CD4-positive, alpha-beta memory T cell (primary cell): ENCODE measurements at regions of chr4 and their contacts with region 1.

Region 1: DNA sequence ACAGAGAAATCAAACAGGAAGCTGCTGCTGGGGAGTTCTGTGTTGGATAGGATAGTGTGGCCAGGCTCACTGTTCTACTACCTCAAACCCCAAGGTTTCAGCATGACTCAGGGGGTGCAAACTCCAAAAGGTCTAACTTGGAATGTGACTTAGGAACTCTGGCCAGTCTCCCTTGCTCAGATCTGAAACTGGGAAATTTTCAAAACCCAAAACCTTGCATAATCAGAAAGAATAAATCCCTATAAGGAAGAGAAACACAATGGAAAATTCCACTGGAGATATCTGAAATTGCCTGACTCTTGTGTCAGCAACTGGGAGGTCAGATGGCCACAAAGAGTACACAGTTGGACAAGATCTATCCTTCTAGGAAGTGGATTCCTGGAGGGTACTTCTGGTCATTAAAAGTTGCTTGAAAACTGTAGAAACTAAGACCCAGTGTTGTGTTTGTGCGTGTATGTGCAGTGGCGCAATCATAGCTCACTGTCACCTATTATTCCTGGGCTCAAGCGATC is 58.0 kb downstream of the PPEF2 start:
- DNase-seq: no peak
- H3K4me3 ChIP-seq: no peak overlapping the region
- H3K4me3 Mint-ChIP-seq: no peak overlapping the region
- H3K27ac ChIP-seq: no peak overlapping the region
- H3K27ac Mint-ChIP-seq: no peak overlapping the region
- H3K4me1 ChIP-seq: no peaks in the 10 kb centered on the region
- H3K4me1 Mint-ChIP-seq: peaks cover 0 to 2% (median under 1%) of the 10 kb centered on the region in 4 donors
- H3K27me3 ChIP-seq: no peaks in the 10 kb centered on the region
- H3K27me3 Mint-ChIP-seq: peaks cover 0 to 2% of the 10 kb centered on the region in 2 donors

Region 2: DNA sequence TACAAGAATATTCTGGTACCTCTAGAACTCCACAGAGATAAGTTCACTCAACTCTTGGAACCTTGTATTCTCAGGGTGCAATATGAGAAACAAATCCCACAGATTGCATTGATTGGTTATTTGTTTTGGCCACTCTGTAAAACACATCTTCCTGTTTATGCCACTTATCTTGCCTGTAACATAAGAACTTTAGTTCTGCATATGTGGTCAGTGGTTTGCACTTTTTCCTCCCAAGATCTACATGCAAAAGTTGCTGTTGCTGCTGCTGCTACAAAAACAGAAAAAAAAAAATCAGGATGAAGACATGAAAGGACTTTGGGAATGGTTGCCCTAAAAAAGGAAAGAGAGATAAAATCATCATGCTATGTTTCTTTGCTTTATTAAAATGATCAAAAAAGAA is 278.7 kb before region 1 on chr4:
- CTCF ChIA-PET with region 1: interaction called, 35 read pairs
- POLR2A ChIA-PET with region 1: no interaction called
- intact Hi-C with region 1: no loop called
- DNase-seq: no peak
- H3K4me3 ChIP-seq: no peak overlapping the region
- H3K4me3 Mint-ChIP-seq: no peak overlapping the region
- H3K27ac ChIP-seq: no peak overlapping the region
- H3K27ac Mint-ChIP-seq: no peak overlapping the region
- H3K4me1 ChIP-seq: no peaks in the 10 kb centered on the region
- H3K4me1 Mint-ChIP-seq: peaks cover 0 to 4% (median 0%) of the 10 kb centered on the region in 4 donors
- H3K27me3 ChIP-seq: no peaks in the 10 kb centered on the region
- H3K27me3 Mint-ChIP-seq: peaks cover 3 to 14% of the 10 kb centered on the region in 2 donors

Region 3: DNA sequence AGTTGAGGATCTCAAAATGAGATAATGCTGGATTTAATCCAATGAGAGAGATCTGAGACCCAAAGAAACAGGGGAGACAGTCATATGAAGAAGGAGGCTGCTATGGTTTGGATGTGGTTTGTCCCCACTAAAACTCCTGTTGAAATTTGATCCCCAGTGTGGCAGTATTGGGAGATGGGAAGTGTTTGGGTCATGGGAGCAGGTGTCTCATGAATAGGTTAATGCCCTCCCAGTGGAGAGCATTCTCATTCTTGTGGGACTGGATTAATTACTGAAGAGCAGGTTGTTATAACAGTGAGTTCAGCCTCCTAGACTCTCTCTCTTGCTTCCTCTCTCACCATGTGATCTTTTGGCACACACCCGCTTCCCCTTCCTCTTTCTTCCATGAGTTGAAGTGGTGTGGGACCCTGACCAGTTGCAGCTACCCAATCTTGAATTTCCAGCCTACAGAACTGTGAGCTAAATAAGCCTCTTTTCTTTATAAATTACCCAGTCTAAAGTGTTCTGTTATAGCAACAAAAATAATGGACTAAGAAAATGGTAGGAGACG is 12.3 kb before region 1 on chr4:
- CTCF ChIA-PET with region 1: interaction called, 18 read pairs
- POLR2A ChIA-PET with region 1: no interaction called
- intact Hi-C with region 1: no loop called
- DNase-seq: no peak
- H3K4me3 ChIP-seq: no peak overlapping the region
- H3K4me3 Mint-ChIP-seq: no peak overlapping the region
- H3K27ac ChIP-seq: no peak overlapping the region
- H3K27ac Mint-ChIP-seq: no peak overlapping the region
- H3K4me1 ChIP-seq: no peaks in the 10 kb centered on the region
- H3K4me1 Mint-ChIP-seq: no peaks in the 10 kb centered on the region
- H3K27me3 ChIP-seq: no peaks in the 10 kb centered on the region
- H3K27me3 Mint-ChIP-seq: no peaks in the 10 kb centered on the region